Esophagus muscularis mucosa (tissue), 4 donors: ENCODE measurements at regions of chr5 and their contacts with region 1.

Region 1: GRCh38 chr5:102583276-102584124 is 84.7 kb upstream of the SLCO6A1 start:
- DNase-seq: no peak
- H3K4me3 ChIP-seq: no peak overlapping the region
- H3K27ac ChIP-seq: no peak overlapping the region
- H3K4me1 ChIP-seq: peaks cover 0 to 5% (median 0%) of the 10 kb centered on the region in 4 donors
- H3K27me3 ChIP-seq: no peaks in the 10 kb centered on the region
- CTCF ChIP-seq: peak in 2 of 3 experiments; percentile 39 to 41
- EP300 ChIP-seq: no peak
- POLR2A ChIP-seq: no peak

Region 2: GRCh38 chr5:102223542-102224477 is 359.7 kb before region 1 on chr5:
- intact Hi-C with region 1: no loop called
- DNase-seq: no peak
- H3K4me3 ChIP-seq: no peak overlapping the region
- H3K27ac ChIP-seq: no peak overlapping the region
- H3K4me1 ChIP-seq: no peaks in the 10 kb centered on the region
- H3K27me3 ChIP-seq: no peaks in the 10 kb centered on the region
- CTCF ChIP-seq: peak; percentile 19 to 55 (median 40)
- EP300 ChIP-seq: no peak
- POLR2A ChIP-seq: no peak

Region 3: DNA sequence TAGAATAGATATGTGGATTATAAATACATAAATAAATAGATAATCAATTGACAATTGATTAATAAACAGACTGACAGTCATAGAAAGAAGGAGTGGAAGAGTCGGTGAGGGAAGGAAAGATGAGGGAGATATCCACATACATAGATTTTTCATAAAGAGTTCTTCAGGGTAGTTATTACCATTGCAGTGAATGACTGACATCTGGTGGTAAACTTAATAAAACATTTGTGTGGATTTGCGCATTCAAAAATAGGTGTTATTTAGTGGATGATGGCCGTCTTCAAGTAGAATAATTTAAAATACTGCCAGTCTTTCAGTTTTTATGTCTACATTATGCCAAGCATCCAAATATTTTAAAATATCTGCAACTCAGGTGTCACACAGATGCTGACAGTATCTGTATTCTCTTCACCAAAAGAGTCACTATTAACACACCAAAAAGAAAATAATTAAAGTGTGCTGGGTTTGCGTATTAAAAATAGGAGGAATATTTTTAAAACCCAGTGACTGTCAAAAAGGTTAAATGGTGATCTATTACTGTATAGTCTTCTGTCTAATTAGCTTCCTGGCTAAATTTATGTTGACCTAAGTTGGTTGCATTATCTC is 457.7 kb after region 1 on chr5:
- intact Hi-C with region 1: loop called (anchors 2 kb)
- DNase-seq: no peak
- H3K4me3 ChIP-seq: no peak overlapping the region
- H3K27ac ChIP-seq: no peak overlapping the region
- H3K4me1 ChIP-seq: no peaks in the 10 kb centered on the region
- H3K27me3 ChIP-seq: no peaks in the 10 kb centered on the region
- CTCF ChIP-seq: peak; percentile 40 to 52 (median 46)
- EP300 ChIP-seq: no peak
- POLR2A ChIP-seq: no peak

Region 4: GRCh38 chr5:103145196-103145595 is 561.7 kb after region 1 on chr5:
- intact Hi-C with region 1: loop called (anchors 10 kb)
- DNase-seq: no peak
- H3K4me3 ChIP-seq: no peak overlapping the region
- H3K27ac ChIP-seq: no peak overlapping the region
- H3K4me1 ChIP-seq: no peaks in the 10 kb centered on the region
- H3K27me3 ChIP-seq: no peaks in the 10 kb centered on the region
- CTCF ChIP-seq: no peak
- EP300 ChIP-seq: no peak
- POLR2A ChIP-seq: no peak